Right lobe of liver (tissue), 6 donors: ENCODE measurements at regions of chr19 and their contacts with region 1.

Region 1: DNA sequence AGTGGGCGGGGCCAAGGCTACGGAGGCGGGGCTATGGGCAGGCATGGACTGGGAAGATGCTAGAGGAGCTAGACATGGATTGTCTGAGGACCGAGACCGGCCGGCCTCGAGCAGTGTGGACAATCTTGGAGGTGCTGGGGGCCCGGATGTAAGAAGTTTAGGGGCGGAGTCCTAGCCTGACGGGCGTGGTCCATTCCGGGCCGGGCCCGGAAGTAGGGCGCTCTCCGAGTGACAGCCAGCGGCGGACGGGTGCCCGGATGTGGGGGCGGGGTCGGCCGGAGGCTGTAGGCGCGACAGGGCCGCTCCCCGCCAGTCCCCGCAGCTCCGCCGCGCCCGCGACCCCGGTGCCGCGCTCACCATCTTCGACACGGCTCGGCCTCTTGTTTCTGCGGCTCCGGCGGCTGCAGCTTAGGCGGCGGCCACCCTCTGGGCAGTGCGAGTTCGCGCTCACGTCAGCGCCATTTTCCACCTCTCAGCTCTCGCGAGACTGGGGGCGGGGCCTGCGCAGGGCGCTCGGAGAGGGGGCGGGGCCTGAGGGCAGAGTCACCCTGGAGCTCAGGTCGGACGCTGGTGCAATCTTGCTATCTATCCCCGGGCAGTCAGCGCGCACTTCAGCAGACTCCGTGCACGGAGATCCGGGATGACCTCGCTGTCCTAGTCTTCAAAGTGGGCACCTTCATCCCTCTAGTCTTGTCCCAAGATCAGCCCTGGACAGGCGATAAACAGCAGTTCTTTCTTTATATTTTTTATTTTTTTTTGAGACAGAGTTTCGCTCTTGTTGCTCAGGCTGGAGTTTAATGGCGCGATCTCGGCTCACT is at the start of gene ZNF414:
- DNase-seq: peak; percentile 97
- ATAC-seq: peak; percentile 89 to 96 (median 91)
- H3K4me3 ChIP-seq: peak within 1 kb of the TSS; percentile 75 to 84 (median 81)
- H3K27ac ChIP-seq: peak within 1 kb of the TSS; percentile 93 to 99 (median 95)
- H3K4me1 ChIP-seq: peaks cover 0 to 12% (median 5%) of the 10 kb centered on the region in 4 donors
- H3K27me3 ChIP-seq: no peaks in the 10 kb centered on the region
- CTCF ChIP-seq: no peak
- POLR2A ChIP-seq: peak; percentile 87
- total RNA-seq, gene ZNF414: 9.5 to 17.4 (median 11.9) TPM

Region 2: DNA sequence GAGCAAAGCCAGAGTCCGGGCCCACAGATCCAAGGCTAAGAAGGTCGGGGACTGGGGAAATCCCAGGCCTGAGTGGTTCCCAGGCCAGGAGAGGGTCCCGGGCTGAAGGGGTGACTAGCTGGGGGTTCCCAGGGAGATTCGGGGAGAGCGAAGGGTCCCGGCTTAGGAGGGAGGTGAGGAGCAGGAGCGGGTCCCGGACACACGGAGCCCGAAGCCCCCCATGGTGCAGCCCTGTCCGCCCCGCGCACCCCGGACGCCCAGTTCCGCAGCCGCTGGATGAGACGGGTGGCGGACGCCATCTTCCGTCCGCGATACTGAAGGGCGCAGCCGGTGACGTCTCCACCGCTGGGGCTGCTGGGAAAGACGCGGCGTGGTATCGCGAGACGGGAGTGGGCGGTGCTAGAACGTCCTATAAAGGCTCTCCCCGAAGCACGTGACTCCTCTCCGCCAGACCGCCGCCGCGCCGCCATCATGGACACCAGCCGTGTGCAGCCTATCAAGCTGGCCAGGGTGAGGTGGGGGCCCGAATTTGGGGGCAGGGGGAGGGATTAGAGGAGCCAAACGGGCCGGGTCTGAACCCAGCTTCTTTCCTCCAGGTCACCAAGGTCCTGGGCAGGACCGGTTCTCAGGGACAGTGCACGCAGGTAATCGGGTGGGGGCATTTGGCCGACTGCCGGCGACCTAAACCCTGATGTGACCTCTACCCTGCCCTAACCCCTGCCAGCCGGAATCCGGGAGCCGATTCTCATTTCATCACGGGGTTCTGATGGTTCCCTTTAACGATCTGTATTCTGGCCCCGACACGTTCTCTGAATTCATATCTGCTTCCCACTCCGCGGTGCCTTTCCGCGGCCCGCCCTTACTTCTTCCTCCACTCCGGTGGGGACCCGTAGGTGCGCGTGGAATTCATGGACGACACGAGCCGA is 192.6 kb before region 1 on chr19 and contains the starts of genes NDUFA7 and RPS28:
- intact Hi-C with region 1: loop called in 1 of 2 experiments (anchors 10 kb)
- DNase-seq: peak; percentile 96 to 98 (median 97)
- ATAC-seq: peak; percentile 88 to 96 (median 92)
- H3K4me3 ChIP-seq: peak within 1 kb of the TSS; percentile 75 to 92 (median 88)
- H3K27ac ChIP-seq: peak within 1 kb of the TSS; percentile 83 to 91 (median 89)
- H3K4me1 ChIP-seq: peaks cover 0 to 31% (median 6%) of the 10 kb centered on the region in 4 donors
- H3K27me3 ChIP-seq: no peaks in the 10 kb centered on the region
- CTCF ChIP-seq: peak; percentile 24 to 45 (median 28)
- POLR2A ChIP-seq: peak; percentile 92
- total RNA-seq, gene NDUFA7: 20.8 to 60.5 (median 25.9) TPM
- total RNA-seq, gene RPS28: 147 to 669 (median 564) TPM